Transverse colon (tissue), 4 donors: ENCODE measurements at regions of chr9 and their contacts with region 1.

Region 1: DNA sequence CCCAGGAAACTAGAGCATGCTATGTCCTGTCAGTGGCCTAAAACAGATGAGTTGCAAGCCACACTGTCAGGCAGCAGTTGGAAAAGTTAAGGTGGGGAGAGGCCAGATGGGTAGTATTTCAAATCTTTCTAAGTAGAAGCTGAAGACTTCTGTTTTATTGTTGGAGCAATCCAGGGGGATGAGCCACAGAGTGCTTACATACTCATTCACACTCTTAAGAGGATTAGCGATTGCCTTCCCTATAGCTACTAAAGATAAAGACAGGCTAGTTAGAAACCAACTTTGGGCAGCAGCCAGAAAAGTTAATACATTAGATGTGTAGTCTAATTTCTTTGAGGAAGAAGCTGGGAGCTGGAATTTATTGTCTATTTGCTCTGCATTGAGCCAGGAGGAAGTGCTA is 61.7 kb upstream of the ELAVL2 start:
- DNase-seq: no peak
- H3K4me3 ChIP-seq: no peak overlapping the region
- H3K27ac ChIP-seq: no peak overlapping the region
- H3K4me1 ChIP-seq: no peaks in the 10 kb centered on the region
- H3K27me3 ChIP-seq: no peaks in the 10 kb centered on the region
- CTCF ChIP-seq: no peak
- EP300 ChIP-seq: no peak
- POLR2A ChIP-seq: no peak

Region 2: GRCh38 chr9:22817181-22817580 is 1070.6 kb before region 1 on chr9:
- in situ Hi-C with region 1: no loop called
- intact Hi-C with region 1: loop called (anchors 5 kb)
- DNase-seq: no peak
- H3K4me3 ChIP-seq: no peak overlapping the region
- H3K27ac ChIP-seq: no peak overlapping the region
- H3K4me1 ChIP-seq: no peaks in the 10 kb centered on the region
- H3K27me3 ChIP-seq: no peaks in the 10 kb centered on the region
- CTCF ChIP-seq: no peak
- EP300 ChIP-seq: no peak
- POLR2A ChIP-seq: no peak

Region 3: DNA sequence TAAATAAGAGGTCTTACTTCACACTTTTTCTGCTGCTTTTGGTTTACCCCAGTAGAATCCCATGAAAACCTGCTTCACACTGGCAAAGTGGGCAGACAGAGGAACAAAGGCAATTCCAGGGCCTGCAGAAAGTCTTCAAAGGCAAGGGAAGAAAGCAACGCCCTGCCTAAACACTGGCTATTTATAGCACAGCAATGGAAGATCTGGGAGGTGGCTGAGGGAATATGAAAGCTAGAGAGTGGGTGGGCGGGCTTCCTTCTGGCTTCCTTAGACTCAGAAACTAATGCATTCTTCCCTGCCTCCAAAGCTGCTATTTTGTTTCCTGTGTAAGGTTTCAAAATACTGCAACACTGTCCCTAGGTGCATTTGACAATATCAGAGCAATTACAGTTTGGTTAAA is 108.6 kb before region 1 on chr9:
- in situ Hi-C with region 1: loop called in 1 of 4 experiments (anchors 25 kb)
- intact Hi-C with region 1: no loop called
- DNase-seq: peak; percentile 29
- H3K4me3 ChIP-seq: peak overlapping the region in 1 of 4 donors; percentile 25
- H3K27ac ChIP-seq: peak overlapping the region; percentile 45 to 56 (median 49)
- H3K4me1 ChIP-seq: peaks cover 0 to 29% (median 8%) of the 10 kb centered on the region in 4 donors
- H3K27me3 ChIP-seq: no peaks in the 10 kb centered on the region
- CTCF ChIP-seq: no peak
- EP300 ChIP-seq: no peak
- POLR2A ChIP-seq: no peak